WTC11 (cell line): ENCODE measurements at regions of chr3 and their contacts with region 1.

Region 1: GRCh38 chr3:101724329-101725193 is at the start of gene CEP97:
- DNase-seq: peak; percentile 90
- ATAC-seq: peak; percentile 98
- H3K4me3 Mint-ChIP-seq: peak within 1 kb of the TSS; percentile 98
- H3K27ac Mint-ChIP-seq: peak within 1 kb of the TSS; percentile 84; the same call in 1 of the 2 replicates
- H3K4me1 Mint-ChIP-seq: peaks cover 7% of the 10 kb centered on the region
- H3K27me3 Mint-ChIP-seq: no peaks in the 10 kb centered on the region
- CTCF ChIP-seq: no peak
- total RNA-seq, gene CEP97: 10.0 to 12.3 TPM (median 12.0 TPM) in 3 replicates

Region 2: DNA sequence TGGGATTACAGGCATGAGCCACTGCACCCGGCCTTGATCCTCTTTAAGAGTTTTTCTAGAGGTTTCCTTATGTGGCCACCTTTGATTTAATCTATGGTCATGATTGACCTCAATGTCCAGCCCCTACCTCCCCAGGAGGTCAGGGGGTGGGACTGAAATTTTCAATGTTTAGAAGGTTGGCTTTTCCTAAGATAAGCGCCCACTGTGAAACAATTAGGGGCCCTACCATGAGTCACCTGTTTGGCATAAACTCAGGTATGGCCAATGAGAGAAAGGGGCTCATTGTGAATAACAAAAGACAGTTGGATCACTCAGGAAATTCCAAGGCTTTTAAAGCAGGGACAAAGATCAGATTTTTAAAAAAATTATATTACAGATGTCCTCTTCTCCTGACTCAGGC is 98.7 kb before region 1 on chr3:
- CTCF ChIA-PET with region 1: no interaction called
- POLR2A ChIA-PET with region 1: no interaction called
- DNase-seq: no peak
- ATAC-seq: peak; percentile 56
- H3K4me3 Mint-ChIP-seq: no peak overlapping the region
- H3K27ac Mint-ChIP-seq: no peak overlapping the region
- H3K4me1 Mint-ChIP-seq: peaks cover 7% of the 10 kb centered on the region; the same call in 1 of the 2 replicates
- H3K27me3 Mint-ChIP-seq: no peaks in the 10 kb centered on the region
- CTCF ChIP-seq: no peak

Region 3: DNA sequence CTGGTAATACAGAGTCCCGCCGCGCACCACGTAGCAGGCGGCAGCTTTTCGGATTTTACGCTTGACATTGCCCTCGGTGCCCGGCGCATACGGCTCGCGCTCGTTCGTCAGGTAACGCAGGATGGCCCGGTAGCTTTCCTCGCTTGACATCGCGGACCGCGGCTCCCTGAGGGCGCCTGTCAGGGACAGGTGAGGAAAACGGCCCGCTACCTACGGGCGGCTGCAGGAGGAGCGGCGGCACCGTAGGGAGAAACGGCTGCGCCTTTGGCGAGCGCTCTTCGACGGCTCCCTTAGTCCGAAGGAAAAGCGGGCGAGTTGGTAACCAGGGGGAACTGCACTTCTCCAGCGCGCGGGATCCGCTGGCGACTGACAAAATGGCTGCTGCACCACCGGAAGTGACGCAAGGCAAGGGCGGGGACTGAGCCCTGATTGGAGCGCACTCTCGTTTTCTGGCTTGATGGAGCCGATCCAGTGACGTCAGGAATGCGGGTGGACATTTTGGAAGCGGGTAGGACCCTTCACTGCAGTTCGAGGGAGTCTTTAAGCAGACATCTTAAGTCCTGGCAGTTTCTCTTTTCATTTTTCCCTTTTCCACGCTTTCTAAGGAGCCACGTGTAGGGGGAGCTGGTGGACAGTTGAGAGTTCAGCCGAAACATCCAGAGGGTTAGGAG is 47.7 kb before region 1 on chr3 and contains the start of gene ZBTB11:
- CTCF ChIA-PET with region 1: interaction called, 10 read pairs
- POLR2A ChIA-PET with region 1: interaction called, 6 read pairs
- DNase-seq: peak; percentile 100
- ATAC-seq: peak; percentile 68
- H3K4me3 Mint-ChIP-seq: peak within 1 kb of the TSS; percentile 95
- H3K27ac Mint-ChIP-seq: peak within 1 kb of the TSS; percentile 98
- H3K4me1 Mint-ChIP-seq: peaks cover 28% of the 10 kb centered on the region
- H3K27me3 Mint-ChIP-seq: no peaks in the 10 kb centered on the region
- CTCF ChIP-seq: no peak
- total RNA-seq, gene ZBTB11: 12.6 to 13.5 TPM (median 12.7 TPM) in 3 replicates

Region 4: DNA sequence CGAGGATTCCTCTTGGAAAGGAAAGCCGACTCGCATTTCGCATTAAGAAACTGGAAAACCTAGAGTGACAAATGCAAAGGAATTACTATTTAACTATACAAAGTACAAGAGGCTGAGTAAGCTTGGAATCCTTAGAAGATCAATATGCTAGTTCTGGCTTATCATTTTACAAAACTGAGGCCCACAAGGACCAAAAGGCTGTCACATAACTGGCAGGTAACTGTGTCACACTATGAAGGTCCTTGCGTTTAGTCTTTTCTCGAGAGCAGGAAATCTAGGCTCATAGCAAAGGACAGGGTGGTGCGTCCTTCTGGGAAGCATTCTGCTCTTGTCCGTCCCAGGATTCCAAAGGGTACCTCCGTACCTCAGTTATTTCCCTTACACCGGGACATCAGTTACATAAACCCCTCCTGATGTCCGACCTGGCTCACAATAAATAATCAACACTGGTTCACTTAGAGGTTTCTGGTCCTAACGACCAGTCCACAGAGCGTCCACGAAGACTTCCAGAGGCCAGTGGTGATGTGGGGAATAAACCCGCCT is 38.6 kb before region 1 on chr3:
- CTCF ChIA-PET with region 1: no interaction called
- POLR2A ChIA-PET with region 1: interaction called, 10 read pairs
- DNase-seq: no peak
- ATAC-seq: no peak
- H3K4me3 Mint-ChIP-seq: peak overlapping the region; percentile 100
- H3K27ac Mint-ChIP-seq: peak overlapping the region; percentile 100
- H3K4me1 Mint-ChIP-seq: peaks cover 19% of the 10 kb centered on the region
- H3K27me3 Mint-ChIP-seq: no peaks in the 10 kb centered on the region; the same call in 1 of the 2 replicates
- CTCF ChIP-seq: no peak

Region 5: GRCh38 chr3:101703169-101703568 is 21.4 kb before region 1 on chr3:
- CTCF ChIA-PET with region 1: interaction called, 11 read pairs
- POLR2A ChIA-PET with region 1: no interaction called
- DNase-seq: no peak
- ATAC-seq: no peak
- H3K4me3 Mint-ChIP-seq: no peak overlapping the region
- H3K27ac Mint-ChIP-seq: no peak overlapping the region
- H3K4me1 Mint-ChIP-seq: peaks cover 18% of the 10 kb centered on the region
- H3K27me3 Mint-ChIP-seq: no peaks in the 10 kb centered on the region
- CTCF ChIP-seq: no peak

Region 6: GRCh38 chr3:101819758-101820157 is 95.2 kb after region 1 on chr3:
- CTCF ChIA-PET with region 1: no interaction called
- POLR2A ChIA-PET with region 1: no interaction called
- DNase-seq: no peak
- ATAC-seq: no peak
- H3K4me3 Mint-ChIP-seq: no peak overlapping the region
- H3K27ac Mint-ChIP-seq: no peak overlapping the region
- H3K4me1 Mint-ChIP-seq: no peaks in the 10 kb centered on the region
- H3K27me3 Mint-ChIP-seq: no peaks in the 10 kb centered on the region
- CTCF ChIP-seq: no peak